ENCODE measurements at regions of chr2 and their contacts with region 1.

Region 1: GRCh38 chr2:19362755-19363473 is 4.5 kb upstream of the OSR1 start:
- DNase-seq: peak; percentile 87 to 89
- ATAC-seq: peak; percentile 64 to 81
- H3K4me3 ChIP-seq: peak overlapping the region; percentile 67
- H3K27ac ChIP-seq: peak overlapping the region; percentile 73 to 76
- H3K4me1 ChIP-seq: peaks cover 9% of the 10 kb centered on the region
- CTCF ChIP-seq: peak; percentile 97
- EP300 ChIP-seq: no peak
- POLR2A ChIP-seq: no peak
- RAD21 ChIP-seq: peak; percentile 94 to 99

Region 2: GRCh38 chr2:18749912-18750526 is 612.9 kb before region 1 on chr2:
- CTCF ChIA-PET with region 1: interaction called, 77 read pairs
- POLR2A ChIA-PET with region 1: no interaction called
- DNase-seq: peak; percentile 28 to 68
- ATAC-seq: peak; percentile 40 to 77; a peak in 3 of 6 replicates
- H3K4me3 ChIP-seq: no peak overlapping the region
- H3K27ac ChIP-seq: peak overlapping the region in 1 of 2 experiments; percentile 51; a peak in 1 of 6 replicates
- H3K4me1 ChIP-seq: peaks cover 22% of the 10 kb centered on the region
- CTCF ChIP-seq: peak; percentile 97
- EP300 ChIP-seq: no peak
- POLR2A ChIP-seq: no peak
- RAD21 ChIP-seq: peak; percentile 97

Region 3: GRCh38 chr2:18987592-18988073 is 375.3 kb before region 1 on chr2:
- CTCF ChIA-PET with region 1: interaction called, 17 read pairs
- POLR2A ChIA-PET with region 1: interaction called, 5 read pairs
- DNase-seq: peak; percentile 27 to 84
- ATAC-seq: peak; percentile 33 to 64; a peak in 3 of 6 replicates
- H3K4me3 ChIP-seq: no peak overlapping the region
- H3K27ac ChIP-seq: peak overlapping the region; percentile 56 to 79
- H3K4me1 ChIP-seq: peaks cover 47% of the 10 kb centered on the region
- CTCF ChIP-seq: peak; percentile 54
- EP300 ChIP-seq: peak; percentile 80; a peak in 3 of 5 replicates
- POLR2A ChIP-seq: no peak
- RAD21 ChIP-seq: peak; percentile 54 to 80

Region 4: GRCh38 chr2:19347619-19348562 is 15.0 kb before region 1 on chr2:
- CTCF ChIA-PET with region 1: interaction called, 23 read pairs
- POLR2A ChIA-PET with region 1: interaction called, 30 read pairs
- DNase-seq: peak; percentile 98
- ATAC-seq: peak; percentile 89 to 94
- H3K4me3 ChIP-seq: peak overlapping the region; percentile 75
- H3K27ac ChIP-seq: peak overlapping the region; percentile 91 to 92
- H3K4me1 ChIP-seq: peaks cover 6% of the 10 kb centered on the region; the same call in 1 of the 3 replicates
- CTCF ChIP-seq: no peak
- EP300 ChIP-seq: no peak
- POLR2A ChIP-seq: peak; percentile 99
- RAD21 ChIP-seq: peak in 1 of 2 experiments; percentile 53; a peak in 3 of 5 replicates

Region 5: DNA sequence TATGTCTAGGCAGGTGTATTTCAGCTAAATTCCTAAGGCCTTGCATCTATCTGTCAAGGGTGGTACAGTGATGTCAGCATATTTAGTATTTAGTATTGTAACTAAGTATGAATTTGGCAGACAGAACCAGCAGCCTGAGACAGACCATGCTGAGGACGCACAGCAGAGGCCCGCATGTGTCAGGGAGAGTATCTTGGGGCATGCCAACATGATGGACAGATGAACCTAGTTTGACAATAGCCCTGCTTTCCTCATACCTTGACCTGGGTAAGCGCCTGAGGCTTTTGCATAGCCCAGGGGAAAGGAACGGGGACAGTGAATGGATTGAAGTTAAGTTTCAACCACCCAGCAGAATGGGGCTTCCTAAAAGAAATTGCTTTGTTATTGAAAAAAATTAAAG is 29.3 kb after region 1 on chr2:
- CTCF ChIA-PET with region 1: no interaction called
- POLR2A ChIA-PET with region 1: no interaction called
- DNase-seq: no peak
- ATAC-seq: no peak
- H3K4me3 ChIP-seq: no peak overlapping the region
- H3K27ac ChIP-seq: no peak overlapping the region
- H3K4me1 ChIP-seq: no peaks in the 10 kb centered on the region
- CTCF ChIP-seq: no peak
- EP300 ChIP-seq: no peak
- POLR2A ChIP-seq: no peak
- RAD21 ChIP-seq: no peak

Measured in A549 (cell line).